ENCODE measurements at regions of chr2 and their contacts with region 1.

Region 1: GRCh38 chr2:176814306-176815052 is 398.1 kb upstream of the HNRNPA3 start:
- DNase-seq: peak; percentile 31
- H3K4me3 ChIP-seq: no peak overlapping the region
- H3K27ac ChIP-seq: no peak overlapping the region
- H3K4me1 ChIP-seq: peaks cover 2 to 5% of the 10 kb centered on the region in 2 experiments; a peak in 2 of 4 replicates
- H3K27me3 ChIP-seq: no peaks in the 10 kb centered on the region
- CTCF ChIP-seq: peak; percentile 63
- EP300 ChIP-seq: no peak
- RAD21 ChIP-seq: peak; percentile 78

Region 2: DNA sequence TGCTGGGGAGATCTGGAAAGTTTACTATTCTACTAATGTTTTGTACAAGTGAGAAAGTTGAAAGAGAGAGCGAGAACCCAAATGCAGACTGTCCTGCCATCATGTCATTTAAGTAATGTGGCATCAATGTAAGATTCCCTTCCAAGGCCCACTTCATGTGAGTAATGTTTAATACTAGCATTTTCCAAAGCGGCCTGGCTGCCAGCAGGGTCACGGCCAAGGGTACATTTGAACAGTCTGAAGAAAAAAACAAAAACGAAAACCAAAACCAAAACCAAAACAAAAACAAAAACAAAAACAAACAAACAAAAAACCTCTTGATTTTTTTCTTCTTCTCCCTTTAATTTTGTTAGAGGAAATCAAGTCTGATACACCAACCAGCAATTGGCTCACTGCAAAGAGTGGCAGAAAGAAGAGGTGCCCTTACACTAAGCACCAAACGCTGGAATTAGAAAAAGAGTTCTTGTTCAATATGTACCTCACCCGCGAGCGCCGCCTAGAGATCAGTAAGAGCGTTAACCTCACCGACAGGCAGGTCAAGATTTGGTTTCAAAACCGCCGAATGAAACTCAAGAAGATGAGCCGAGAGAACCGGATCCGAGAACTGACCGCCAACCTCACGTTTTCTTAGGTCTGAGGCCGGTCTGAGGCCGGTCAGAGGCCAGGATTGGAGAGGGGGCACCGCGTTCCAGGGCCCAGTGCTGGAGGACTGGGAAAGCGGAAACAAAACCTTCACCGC is 695.7 kb before region 1 on chr2:
- CTCF ChIA-PET with region 1: interaction called, 14 read pairs
- POLR2A ChIA-PET with region 1: no interaction called
- DNase-seq: peak; percentile 66
- H3K4me3 ChIP-seq: no peak overlapping the region
- H3K27ac ChIP-seq: no peak overlapping the region
- H3K4me1 ChIP-seq: peaks cover 0 to 17% of the 10 kb centered on the region in 2 experiments; a peak in 1 of 4 replicates
- H3K27me3 ChIP-seq: peaks cover 40% of the 10 kb centered on the region
- CTCF ChIP-seq: peak; percentile 66
- EP300 ChIP-seq: no peak
- RAD21 ChIP-seq: peak; percentile 41

Region 3: GRCh38 chr2:176675271-176675949 is 139.1 kb before region 1 on chr2:
- CTCF ChIA-PET with region 1: interaction called, 12 read pairs
- POLR2A ChIA-PET with region 1: no interaction called
- DNase-seq: no peak
- H3K4me3 ChIP-seq: no peak overlapping the region
- H3K27ac ChIP-seq: no peak overlapping the region
- H3K4me1 ChIP-seq: peaks cover 0 to 15% of the 10 kb centered on the region in 2 experiments; a peak in 2 of 4 replicates
- H3K27me3 ChIP-seq: no peaks in the 10 kb centered on the region
- CTCF ChIP-seq: no peak
- EP300 ChIP-seq: no peak
- RAD21 ChIP-seq: no peak

Region 4: DNA sequence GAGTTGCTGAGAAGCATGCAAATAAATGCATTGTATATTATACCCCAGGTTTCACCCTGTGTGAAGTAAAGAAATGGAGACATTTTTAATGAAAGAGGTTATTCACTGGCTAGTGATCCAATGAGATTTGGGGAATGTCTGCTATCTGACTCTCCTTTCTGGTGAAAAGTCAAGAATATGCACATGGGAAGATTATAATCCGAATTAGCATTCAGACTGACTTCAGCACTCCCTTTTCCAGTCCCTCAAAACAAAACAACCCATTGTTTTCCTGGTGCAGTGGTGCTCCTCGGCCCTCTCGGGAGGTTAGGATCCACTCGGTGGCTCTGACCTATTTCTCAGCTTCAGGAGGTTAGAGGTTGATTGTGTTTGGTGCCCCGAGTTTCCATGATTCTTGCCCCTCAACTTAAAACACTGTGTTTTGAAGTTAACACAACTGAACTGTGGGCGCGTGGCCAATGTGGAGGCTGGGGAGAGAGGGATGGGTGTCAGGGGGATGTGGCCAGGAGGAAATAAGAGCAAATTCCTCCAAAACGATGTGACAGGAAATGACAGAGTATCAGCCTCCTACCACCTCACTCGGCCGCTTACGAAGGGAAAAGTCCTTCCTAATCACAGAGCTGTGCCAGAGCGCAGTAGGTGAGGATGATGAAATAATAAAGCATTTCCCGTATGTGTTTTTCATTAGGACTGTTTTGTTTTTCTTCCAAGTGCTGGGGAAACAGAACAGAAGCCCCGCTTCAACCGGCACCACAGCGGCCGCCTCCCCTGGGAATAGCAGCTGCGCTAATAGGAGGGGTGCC is 105.1 kb before region 1 on chr2:
- CTCF ChIA-PET with region 1: no interaction called
- POLR2A ChIA-PET with region 1: no interaction called
- DNase-seq: no peak
- H3K4me3 ChIP-seq: no peak overlapping the region
- H3K27ac ChIP-seq: no peak overlapping the region
- H3K4me1 ChIP-seq: peaks cover 15 to 24% of the 10 kb centered on the region in 2 experiments; a peak in 3 of 4 replicates
- H3K27me3 ChIP-seq: no peaks in the 10 kb centered on the region
- CTCF ChIP-seq: no peak
- EP300 ChIP-seq: no peak
- RAD21 ChIP-seq: no peak

Region 5: DNA sequence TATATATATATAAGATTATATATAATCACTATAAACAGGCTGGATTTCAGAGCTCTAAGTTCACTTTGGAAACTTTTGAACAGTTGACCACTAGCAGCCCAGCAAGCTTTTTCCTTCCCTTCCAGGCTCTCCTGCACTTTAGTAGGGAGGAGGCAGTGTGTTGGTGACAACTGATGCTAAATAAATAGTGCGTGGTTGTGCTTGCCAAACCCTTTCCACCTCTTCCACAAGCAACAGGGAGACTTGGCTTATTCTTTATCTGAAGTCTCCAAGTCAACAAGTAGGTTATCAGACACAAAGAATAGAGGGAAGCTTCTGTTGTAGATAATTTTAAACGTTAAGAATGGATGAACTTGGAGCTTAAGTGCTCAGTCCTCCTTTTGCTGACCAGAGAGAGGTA is 10.1 kb before region 1 on chr2:
- CTCF ChIA-PET with region 1: interaction called, 28 read pairs
- POLR2A ChIA-PET with region 1: no interaction called
- DNase-seq: no peak
- H3K4me3 ChIP-seq: no peak overlapping the region
- H3K27ac ChIP-seq: no peak overlapping the region
- H3K4me1 ChIP-seq: peaks cover 0 to 2% of the 10 kb centered on the region in 2 experiments; a peak in 2 of 4 replicates
- H3K27me3 ChIP-seq: no peaks in the 10 kb centered on the region
- CTCF ChIP-seq: no peak
- EP300 ChIP-seq: no peak
- RAD21 ChIP-seq: no peak

Measured in SK-N-SH (cell line).